Posterior vena cava (tissue), 2 donors: ENCODE measurements at regions of chr11 and their contacts with region 1.

Region 1: DNA sequence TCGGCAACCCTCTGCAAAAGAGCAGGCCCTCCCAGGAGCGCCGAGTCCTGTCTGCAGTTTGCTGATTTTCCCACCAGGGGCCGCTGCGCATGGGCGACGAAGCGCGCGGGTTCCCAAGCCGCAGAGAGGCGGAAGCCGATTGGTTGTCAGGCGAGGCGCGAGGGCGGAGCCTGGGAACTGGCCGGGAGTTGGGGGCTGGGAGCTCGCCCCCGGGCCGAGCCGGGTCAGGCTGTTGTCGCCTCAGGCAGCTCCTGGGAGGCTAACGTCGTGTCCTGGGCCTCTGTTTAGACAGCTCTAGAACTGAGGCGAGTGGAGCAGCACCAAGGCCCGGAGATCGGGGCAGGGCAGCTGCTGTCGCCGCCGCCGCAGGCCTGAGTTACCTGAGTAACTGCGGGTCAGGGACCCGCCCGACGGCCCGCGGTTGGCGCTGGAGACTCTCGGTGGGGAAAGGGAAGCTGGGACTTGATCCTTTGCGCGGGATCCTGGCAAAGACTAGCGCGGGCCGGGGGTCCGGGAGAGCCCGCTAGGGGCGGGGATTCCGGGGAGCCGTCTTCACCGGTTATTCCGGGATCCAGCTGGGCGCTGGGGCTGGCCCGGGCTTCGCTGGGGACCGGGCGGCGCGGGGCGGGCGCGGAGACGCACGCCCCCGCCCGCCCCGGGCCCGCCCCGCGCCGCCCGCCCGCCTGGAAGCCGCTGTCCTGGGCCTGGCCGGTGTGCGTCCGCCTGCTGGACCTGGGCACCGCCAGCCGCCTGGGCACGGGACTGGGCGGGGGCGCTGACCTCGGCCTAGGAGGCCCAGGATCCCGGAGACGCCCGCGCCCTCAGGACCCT is at the start of gene STIM1:
- DNase-seq: peak; percentile 99
- total RNA-seq, gene STIM1: 66.9 to 81.7 TPM

Region 2: GRCh38 chr11:3894128-3894731 is 39.0 kb after region 1 on chr11:
- intact Hi-C with region 1: no loop called
- DNase-seq: no peak

Region 3: GRCh38 chr11:3971756-3972404 is 116.7 kb after region 1 on chr11:
- intact Hi-C with region 1: loop called (anchors 10 kb)
- DNase-seq: no peak

Region 4: GRCh38 chr11:4072668-4073285 is 217.6 kb after region 1 on chr11:
- intact Hi-C with region 1: loop called in 1 of 2 experiments (anchors 5 kb)
- DNase-seq: no peak